A673 (cell line): ENCODE measurements at regions of chr18 and their contacts with region 1.

Region 1: GRCh38 chr18:74994502-74995419 is 214.2 kb downstream of the PTGR3 start:
- DNase-seq: peak; percentile 88
- H3K4me3 ChIP-seq: peak overlapping the region; percentile 18
- H3K27ac ChIP-seq: peak overlapping the region; percentile 87
- H3K4me1 ChIP-seq: peaks cover 68% of the 10 kb centered on the region
- H3K27me3 ChIP-seq: no peaks in the 10 kb centered on the region
- CTCF ChIP-seq: no peak

Region 2: DNA sequence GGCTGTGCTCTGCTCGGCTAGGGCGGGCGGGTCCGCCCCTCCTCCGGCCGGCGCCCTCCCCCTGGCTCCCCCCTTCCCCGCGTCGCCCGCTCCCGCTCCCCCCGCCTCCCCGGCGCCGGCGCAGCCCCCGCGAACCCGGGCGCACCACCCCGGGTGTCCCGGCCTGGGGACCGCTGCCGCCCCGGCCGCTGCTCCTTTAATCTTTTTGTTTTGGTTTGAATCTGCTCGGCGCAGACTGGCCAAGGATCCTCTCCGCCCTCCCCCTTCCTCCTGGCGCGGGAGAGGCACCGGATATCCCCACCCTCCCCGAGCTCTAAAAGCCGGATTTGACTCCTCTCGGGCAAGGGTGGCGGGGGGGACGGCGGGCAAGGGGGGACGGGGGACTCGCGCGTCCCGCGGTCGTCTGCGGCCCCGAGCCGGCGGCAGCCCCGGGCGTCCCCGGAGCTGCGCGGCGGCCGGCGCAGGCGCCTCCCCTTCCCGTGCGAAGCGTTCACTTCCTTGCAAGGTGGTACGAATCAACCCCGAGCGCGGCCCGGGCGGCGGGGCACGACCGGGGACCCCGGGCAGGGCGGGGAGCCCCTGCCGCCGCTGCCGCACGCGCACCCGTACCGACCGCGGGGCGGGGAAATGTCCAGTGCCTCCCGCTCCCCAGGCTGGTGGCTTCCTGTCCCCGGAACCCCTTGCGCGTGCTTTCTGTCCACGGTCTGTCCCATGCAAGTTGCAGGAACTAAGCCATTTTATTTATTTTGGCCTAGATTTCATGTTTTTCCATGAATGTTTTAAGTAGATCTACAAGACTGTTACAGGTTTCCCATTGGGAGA is 214.6 kb after region 1 on chr18 and contains the start of gene PTGR3:
- CTCF ChIA-PET with region 1: no interaction called
- POLR2A ChIA-PET with region 1: no interaction called
- intact Hi-C with region 1: loop called (anchors 5 kb)
- DNase-seq: peak; percentile 81
- H3K4me3 ChIP-seq: peak within 1 kb of the TSS; percentile 69
- H3K27ac ChIP-seq: peak within 1 kb of the TSS; percentile 77
- H3K4me1 ChIP-seq: peaks cover 28% of the 10 kb centered on the region
- H3K27me3 ChIP-seq: peaks cover 63% of the 10 kb centered on the region
- CTCF ChIP-seq: no peak
- total RNA-seq, gene PTGR3: 6.9 and 7.4 TPM in 2 replicates